MCF 10A (cell line): ENCODE measurements at regions of chr21 and their contacts with region 1.

Region 1: GRCh38 chr21:15552914-15553494 is 176.8 kb upstream of the USP25 start:
- DNase-seq: peak; percentile 41
- H3K4me3 Mint-ChIP-seq: no peak overlapping the region
- H3K27ac Mint-ChIP-seq: no peak overlapping the region
- H3K4me1 Mint-ChIP-seq: no peaks in the 10 kb centered on the region
- H3K27me3 Mint-ChIP-seq: no peaks in the 10 kb centered on the region
- CTCF ChIP-seq: peak; percentile 40

Region 2: GRCh38 chr21:14864211-14865021 is 688.6 kb before region 1 on chr21:
- CTCF ChIA-PET with region 1: interaction called, 6 read pairs
- POLR2A ChIA-PET with region 1: no interaction called
- intact Hi-C with region 1: loop called (anchors 1 kb)
- DNase-seq: peak; percentile 78
- H3K4me3 Mint-ChIP-seq: no peak overlapping the region
- H3K27ac Mint-ChIP-seq: peak overlapping the region; percentile 29
- H3K4me1 Mint-ChIP-seq: peaks cover 30% of the 10 kb centered on the region
- H3K27me3 Mint-ChIP-seq: no peaks in the 10 kb centered on the region
- CTCF ChIP-seq: peak; percentile 45

Region 3: DNA sequence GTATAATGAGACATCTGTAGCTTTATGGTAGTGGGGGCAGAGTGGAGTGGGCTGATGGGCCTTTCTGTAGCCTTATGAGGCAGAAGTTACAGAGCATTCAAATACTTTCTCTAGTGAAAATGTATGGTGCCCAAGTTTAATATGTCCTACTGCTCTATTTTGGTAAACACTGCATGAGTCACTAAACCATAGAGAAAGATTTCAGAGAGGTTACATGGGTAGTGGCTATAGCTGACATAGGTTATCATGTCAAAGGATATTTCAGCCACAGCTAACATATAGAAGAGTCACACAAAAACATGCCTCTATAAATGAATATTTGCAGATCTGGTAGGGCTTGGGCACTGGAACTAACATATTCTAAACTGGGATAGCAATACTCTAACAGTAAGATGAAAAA is 35.6 kb before region 1 on chr21:
- CTCF ChIA-PET with region 1: interaction called, 13 read pairs
- POLR2A ChIA-PET with region 1: no interaction called
- intact Hi-C with region 1: no loop called
- DNase-seq: no peak
- H3K4me3 Mint-ChIP-seq: no peak overlapping the region
- H3K27ac Mint-ChIP-seq: no peak overlapping the region
- H3K4me1 Mint-ChIP-seq: no peaks in the 10 kb centered on the region
- H3K27me3 Mint-ChIP-seq: no peaks in the 10 kb centered on the region
- CTCF ChIP-seq: no peak